ENCODE measurements at regions of chr10 and their contacts with region 1.

Region 1: GRCh38 chr10:78972947-78973900 is 95.5 kb upstream of the ZMIZ1 start:
- DNase-seq: peak; percentile 73
- H3K4me3 Mint-ChIP-seq: peak overlapping the region; percentile 70
- H3K27ac Mint-ChIP-seq: peak overlapping the region; percentile 81
- H3K4me1 Mint-ChIP-seq: peaks cover 42% of the 10 kb centered on the region
- H3K27me3 Mint-ChIP-seq: peaks cover 19% of the 10 kb centered on the region

Region 2: DNA sequence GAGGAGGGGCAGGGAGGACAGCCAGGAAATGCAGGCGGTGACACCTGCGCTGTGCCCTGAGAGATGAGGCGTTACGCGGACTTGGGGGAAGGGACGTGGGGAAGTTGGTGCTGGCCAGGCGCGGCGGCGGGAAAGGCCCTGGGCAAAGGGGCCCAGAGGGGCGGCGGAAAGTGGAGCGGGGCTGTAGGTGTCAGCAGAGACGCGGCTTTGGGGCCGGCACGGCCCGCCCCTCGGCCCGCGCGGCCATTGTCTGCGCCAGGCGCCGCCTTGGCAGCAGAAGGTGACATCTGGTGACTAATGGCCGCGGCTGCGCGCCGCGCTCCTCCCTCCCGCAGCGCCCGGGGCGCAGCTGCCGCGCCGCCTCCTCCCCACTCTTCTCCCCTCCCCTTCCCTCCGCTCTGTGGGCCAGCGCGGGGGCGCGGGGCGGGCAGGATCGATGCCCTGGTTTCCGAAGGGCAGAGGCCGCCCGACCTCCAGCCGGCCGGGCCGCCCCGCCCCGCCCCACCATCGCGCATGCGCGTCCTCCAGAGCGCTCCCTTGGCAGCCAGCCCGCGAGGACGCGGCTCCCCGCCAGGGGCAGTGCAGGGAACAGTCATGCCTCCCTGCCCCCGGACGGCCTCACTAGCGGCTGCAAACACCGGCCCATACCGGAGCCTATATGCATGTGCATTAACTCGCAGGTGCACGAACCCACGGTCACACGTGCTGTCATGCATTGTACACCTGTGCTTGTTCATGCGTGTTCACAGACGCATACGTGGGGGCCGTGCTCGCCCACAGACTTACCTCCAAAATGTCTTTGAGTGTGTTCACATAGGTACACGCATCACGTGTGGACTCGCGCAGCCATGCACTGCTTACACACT is 670.0 kb before region 1 on chr10:
- intact Hi-C with region 1: loop called (anchors 1 kb)
- DNase-seq: peak; percentile 91
- H3K4me3 Mint-ChIP-seq: peak overlapping the region; percentile 87
- H3K27ac Mint-ChIP-seq: peak overlapping the region; percentile 91
- H3K4me1 Mint-ChIP-seq: peaks cover 15% of the 10 kb centered on the region
- H3K27me3 Mint-ChIP-seq: peaks cover 16% of the 10 kb centered on the region

Region 3: DNA sequence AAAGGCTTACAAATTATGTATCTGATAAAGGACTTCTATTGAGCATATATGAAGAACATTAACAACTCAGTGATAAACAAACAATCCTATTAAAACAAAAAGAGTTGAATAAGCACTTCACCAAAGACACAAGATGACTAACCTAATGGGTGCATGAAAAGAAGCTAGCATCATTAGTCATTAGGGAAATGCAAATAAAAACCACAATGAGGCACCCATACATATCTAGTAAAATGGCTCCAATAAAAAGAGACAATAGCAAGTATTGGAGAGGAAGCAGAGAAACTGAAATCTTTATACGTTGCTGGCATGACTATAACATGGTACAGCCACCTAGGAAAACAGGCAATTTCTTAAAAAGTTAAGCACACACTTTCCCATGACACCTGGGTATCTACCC is 18.0 kb after region 1 on chr10:
- intact Hi-C with region 1: loop called (anchors 1 kb)
- DNase-seq: no peak
- H3K4me3 Mint-ChIP-seq: no peak overlapping the region
- H3K27ac Mint-ChIP-seq: no peak overlapping the region
- H3K4me1 Mint-ChIP-seq: peaks cover 10% of the 10 kb centered on the region
- H3K27me3 Mint-ChIP-seq: peaks cover 9% of the 10 kb centered on the region

Region 4: GRCh38 chr10:79047875-79048638 is 74.8 kb after region 1 on chr10:
- intact Hi-C with region 1: loop called (anchors 1 kb)
- DNase-seq: peak; percentile 68
- H3K4me3 Mint-ChIP-seq: peak overlapping the region; percentile 72
- H3K27ac Mint-ChIP-seq: peak overlapping the region; percentile 94
- H3K4me1 Mint-ChIP-seq: peaks cover 40% of the 10 kb centered on the region
- H3K27me3 Mint-ChIP-seq: peaks cover 7% of the 10 kb centered on the region

Region 5: DNA sequence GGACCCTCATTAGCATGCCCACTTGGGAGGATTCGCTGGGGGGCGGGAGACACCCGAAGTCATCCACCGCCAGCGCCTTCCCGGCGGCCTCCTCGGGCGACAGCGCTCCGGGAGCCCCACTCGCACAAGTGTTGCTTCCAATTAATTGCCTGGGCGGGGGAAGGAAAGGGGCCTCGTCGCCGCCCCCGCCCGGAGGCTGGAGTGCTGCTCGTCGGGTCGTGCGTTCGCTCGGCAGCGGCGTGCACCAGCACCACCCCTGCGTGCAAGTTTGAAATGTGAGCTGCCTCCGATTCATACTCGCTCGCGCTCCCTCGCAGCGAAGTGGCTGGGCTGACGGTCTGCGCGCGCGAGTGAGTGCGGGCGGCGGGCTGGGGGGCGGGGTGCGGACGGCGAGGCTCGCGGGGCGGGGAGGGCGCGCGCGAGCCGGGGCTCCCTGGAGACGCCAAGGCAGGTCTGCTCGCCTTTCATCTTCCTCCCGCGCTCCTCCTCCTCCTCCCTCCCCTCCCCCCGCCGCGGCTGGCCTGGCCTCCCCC is 269.5 kb after region 1 on chr10:
- intact Hi-C with region 1: loop called (anchors 1 kb)
- DNase-seq: peak; percentile 65
- H3K4me3 Mint-ChIP-seq: peak overlapping the region; percentile 81
- H3K27ac Mint-ChIP-seq: peak overlapping the region; percentile 83
- H3K4me1 Mint-ChIP-seq: peaks cover 71% of the 10 kb centered on the region
- H3K27me3 Mint-ChIP-seq: no peaks in the 10 kb centered on the region

Region 6: GRCh38 chr10:79331709-79332108 is 358.5 kb after region 1 on chr10:
- intact Hi-C with region 1: loop called (anchors 5 kb)
- DNase-seq: peak; percentile 87
- H3K4me3 Mint-ChIP-seq: peak overlapping the region; percentile 40
- H3K27ac Mint-ChIP-seq: peak overlapping the region; percentile 94
- H3K4me1 Mint-ChIP-seq: peaks cover 58% of the 10 kb centered on the region
- H3K27me3 Mint-ChIP-seq: no peaks in the 10 kb centered on the region

Measured in activated T-helper 1 cell treated with anti-CD3 and anti-CD28 coated beads, Interleukin-12 subunit alpha, Interleukin-12 subunit beta, Interleukin-2, Interleukin-4 antibody, amounts not matched to agents 30 ng/mL and 10 ng/mL and 1 ng/mL, durations not matched to agents 14 hours and 24 hours and 36 hours (primary cell).